B cell (primary cell): ENCODE measurements at regions of chr1 and their contacts with region 1.

Region 1: GRCh38 chr1:206663832-206664652 is 20.7 kb upstream of the MAPKAPK2 start:
- DNase-seq: peak; percentile 86
- ATAC-seq: peak; percentile 80
- H3K4me3 ChIP-seq: peak overlapping the region in 2 of 5 experiments; percentile 31 to 34
- H3K4me3 Mint-ChIP-seq: peak overlapping the region; percentile 64
- H3K27ac ChIP-seq: no peak overlapping the region
- H3K27ac Mint-ChIP-seq: no peak overlapping the region
- H3K4me1 ChIP-seq: peaks cover 14 to 16% of the 10 kb centered on the region in 2 donors
- H3K4me1 Mint-ChIP-seq: peaks cover 24% of the 10 kb centered on the region
- H3K27me3 ChIP-seq: peaks cover 0 to 48% (median 15%) of the 10 kb centered on the region in 4 experiments
- H3K27me3 Mint-ChIP-seq: peaks cover 40% of the 10 kb centered on the region
- CTCF ChIP-seq: peak; percentile 89

Region 2: DNA sequence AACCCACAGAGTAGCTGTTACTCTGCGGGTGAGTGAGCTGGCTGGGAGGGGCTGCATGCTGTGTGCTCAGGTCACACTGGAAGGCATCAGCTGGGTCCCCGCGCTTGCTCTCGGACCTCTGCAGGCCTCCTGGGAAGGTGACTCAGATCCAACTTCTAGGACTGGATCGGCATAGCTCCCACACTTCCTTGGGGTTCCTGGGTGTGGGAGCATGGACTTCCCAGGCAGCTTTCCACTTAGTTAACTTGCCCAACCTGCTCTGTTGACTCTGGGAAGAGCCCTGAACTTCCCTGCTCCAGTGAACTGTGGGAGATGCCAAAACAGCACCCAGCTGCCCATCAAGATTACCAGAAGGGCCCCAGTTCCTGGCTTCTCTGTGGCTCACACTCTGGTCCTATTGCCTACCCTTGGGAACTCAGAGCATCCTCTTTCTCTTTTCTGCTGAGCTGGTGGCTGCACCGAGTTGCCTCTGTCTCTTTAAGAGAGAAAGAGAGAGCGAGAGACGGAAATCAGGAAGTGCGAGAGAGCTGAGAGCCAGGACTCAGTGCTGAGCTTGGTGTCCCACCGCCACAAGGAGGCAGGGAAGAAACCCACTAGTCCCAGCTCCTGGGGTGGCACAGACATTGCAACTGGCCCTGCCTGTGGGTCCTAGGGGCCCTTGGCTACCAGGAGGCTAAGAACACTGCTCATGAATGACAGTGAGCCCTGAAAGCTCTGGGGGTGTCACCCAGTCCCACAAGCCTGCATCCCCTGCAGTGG is 193.9 kb before region 1 on chr1 and contains the start of gene IKBKE:
- CTCF ChIA-PET with region 1: interaction called, 13 read pairs
- POLR2A ChIA-PET with region 1: no interaction called
- intact Hi-C with region 1: no loop called
- DNase-seq: peak; percentile 77
- ATAC-seq: peak; percentile 65
- H3K4me3 ChIP-seq: peak within 1 kb of the TSS; percentile 62 to 97 (median 85)
- H3K4me3 Mint-ChIP-seq: peak within 1 kb of the TSS; percentile 88
- H3K27ac ChIP-seq: peak within 1 kb of the TSS; percentile 63 to 75
- H3K27ac Mint-ChIP-seq: peak within 1 kb of the TSS; percentile 85
- H3K4me1 ChIP-seq: peaks cover 63 to 74% of the 10 kb centered on the region in 2 donors
- H3K4me1 Mint-ChIP-seq: peaks cover 73% of the 10 kb centered on the region
- H3K27me3 ChIP-seq: no peaks in the 10 kb centered on the region
- H3K27me3 Mint-ChIP-seq: no peaks in the 10 kb centered on the region
- CTCF ChIP-seq: peak; percentile 30
- total RNA-seq, gene IKBKE: 40.5 and 40.8 TPM in 2 replicates

Region 3: GRCh38 chr1:206544562-206545257 is 119.3 kb before region 1 on chr1:
- CTCF ChIA-PET with region 1: interaction called, 26 read pairs
- POLR2A ChIA-PET with region 1: no interaction called
- intact Hi-C with region 1: no loop called
- DNase-seq: peak; percentile 84
- ATAC-seq: peak; percentile 95
- H3K4me3 ChIP-seq: no peak overlapping the region
- H3K4me3 Mint-ChIP-seq: no peak overlapping the region
- H3K27ac ChIP-seq: no peak overlapping the region
- H3K27ac Mint-ChIP-seq: no peak overlapping the region
- H3K4me1 ChIP-seq: peaks cover 0 to 6% of the 10 kb centered on the region in 2 donors
- H3K4me1 Mint-ChIP-seq: peaks cover 7% of the 10 kb centered on the region
- H3K27me3 ChIP-seq: no peaks in the 10 kb centered on the region
- H3K27me3 Mint-ChIP-seq: no peaks in the 10 kb centered on the region
- CTCF ChIP-seq: peak; percentile 92

Region 4: DNA sequence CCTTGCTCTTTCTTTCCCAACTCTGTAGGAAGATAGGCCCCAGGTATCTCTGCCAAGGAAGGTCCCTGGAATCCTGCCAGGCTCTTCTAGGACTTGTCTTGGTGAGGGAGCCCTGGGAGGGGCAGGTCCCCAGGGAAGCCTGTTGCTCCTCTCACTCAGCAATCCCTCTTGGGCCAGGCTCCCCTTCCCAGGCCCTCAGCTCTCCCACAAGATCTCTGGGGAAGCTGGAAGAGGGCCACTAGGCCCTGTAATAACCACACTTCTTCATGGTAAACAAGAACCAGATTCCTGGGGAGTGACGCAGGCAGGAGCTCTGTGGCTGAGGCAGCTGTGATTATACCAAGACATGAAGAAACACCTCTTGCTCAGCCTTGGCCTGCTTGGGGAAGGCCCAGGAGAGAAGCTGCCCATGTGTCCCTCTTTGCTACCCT is 10.7 kb after region 1 on chr1:
- CTCF ChIA-PET with region 1: interaction called, 86 read pairs
- POLR2A ChIA-PET with region 1: interaction called, 6 read pairs
- intact Hi-C with region 1: loop called (anchors 2 kb)
- DNase-seq: no peak
- ATAC-seq: no peak
- H3K4me3 ChIP-seq: no peak overlapping the region
- H3K4me3 Mint-ChIP-seq: no peak overlapping the region
- H3K27ac ChIP-seq: no peak overlapping the region
- H3K27ac Mint-ChIP-seq: peak overlapping the region; percentile 21
- H3K4me1 ChIP-seq: peaks cover 40 to 53% of the 10 kb centered on the region in 2 donors
- H3K4me1 Mint-ChIP-seq: peaks cover 31% of the 10 kb centered on the region
- H3K27me3 ChIP-seq: peaks cover 0 to 32% (median 6%) of the 10 kb centered on the region in 4 experiments
- H3K27me3 Mint-ChIP-seq: peaks cover 11% of the 10 kb centered on the region
- CTCF ChIP-seq: no peak

Region 5: GRCh38 chr1:206716870-206717673 is 53.0 kb after region 1 on chr1:
- CTCF ChIA-PET with region 1: interaction called, 145 read pairs
- POLR2A ChIA-PET with region 1: no interaction called
- intact Hi-C with region 1: no loop called
- DNase-seq: peak; percentile 49
- ATAC-seq: no peak
- H3K4me3 ChIP-seq: no peak overlapping the region
- H3K4me3 Mint-ChIP-seq: peak overlapping the region; percentile 24
- H3K27ac ChIP-seq: peak overlapping the region; percentile 35 to 75
- H3K27ac Mint-ChIP-seq: peak overlapping the region; percentile 81
- H3K4me1 ChIP-seq: peaks cover 70 to 77% of the 10 kb centered on the region in 2 donors
- H3K4me1 Mint-ChIP-seq: peaks cover 81% of the 10 kb centered on the region
- H3K27me3 ChIP-seq: no peaks in the 10 kb centered on the region
- H3K27me3 Mint-ChIP-seq: no peaks in the 10 kb centered on the region
- CTCF ChIP-seq: no peak

Region 6: DNA sequence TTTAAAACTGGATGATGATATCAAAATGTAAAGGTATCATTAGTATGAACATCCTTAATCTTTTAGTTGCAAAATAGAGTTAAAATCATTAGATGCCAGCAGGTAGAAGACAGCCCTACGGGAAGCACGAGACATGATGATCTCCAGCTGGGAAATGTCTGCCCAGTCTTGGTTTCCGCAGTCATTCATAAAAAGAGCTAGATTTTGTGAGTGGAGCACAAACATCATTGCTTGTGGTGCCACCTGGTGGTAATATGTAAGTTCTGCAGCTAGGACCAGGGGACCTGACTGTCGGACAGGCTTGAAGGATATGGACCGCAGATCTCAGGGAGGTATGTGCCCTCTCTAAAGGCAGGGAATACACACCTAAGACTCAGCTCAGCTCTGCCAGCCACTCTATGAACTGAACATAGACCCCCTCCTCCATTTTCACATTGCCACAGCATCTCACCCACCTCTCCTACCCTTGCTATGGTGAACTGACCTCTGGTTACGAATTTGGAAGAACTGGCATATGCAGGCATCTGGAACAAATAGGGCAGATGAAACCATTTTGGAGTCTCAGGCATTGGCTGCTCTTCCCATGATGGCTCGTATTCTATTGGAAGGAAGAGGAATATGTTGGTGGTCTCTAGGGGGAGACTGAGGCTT is 248.5 kb after region 1 on chr1:
- CTCF ChIA-PET with region 1: interaction called, 10 read pairs
- POLR2A ChIA-PET with region 1: no interaction called
- intact Hi-C with region 1: no loop called
- DNase-seq: peak; percentile 84
- ATAC-seq: peak; percentile 62
- H3K4me3 ChIP-seq: peak overlapping the region in 4 of 5 experiments; percentile 8 to 32 (median 18)
- H3K4me3 Mint-ChIP-seq: no peak overlapping the region
- H3K27ac ChIP-seq: peak overlapping the region; percentile 30 to 88
- H3K27ac Mint-ChIP-seq: peak overlapping the region; percentile 87
- H3K4me1 ChIP-seq: peaks cover 97 to 99% of the 10 kb centered on the region in 2 donors
- H3K4me1 Mint-ChIP-seq: peaks cover 94% of the 10 kb centered on the region
- H3K27me3 ChIP-seq: no peaks in the 10 kb centered on the region
- H3K27me3 Mint-ChIP-seq: no peaks in the 10 kb centered on the region
- CTCF ChIP-seq: peak; percentile 86